Heart left ventricle (tissue), 16 donors: ENCODE measurements at regions of chr22 and their contacts with region 1.

Region 1: DNA sequence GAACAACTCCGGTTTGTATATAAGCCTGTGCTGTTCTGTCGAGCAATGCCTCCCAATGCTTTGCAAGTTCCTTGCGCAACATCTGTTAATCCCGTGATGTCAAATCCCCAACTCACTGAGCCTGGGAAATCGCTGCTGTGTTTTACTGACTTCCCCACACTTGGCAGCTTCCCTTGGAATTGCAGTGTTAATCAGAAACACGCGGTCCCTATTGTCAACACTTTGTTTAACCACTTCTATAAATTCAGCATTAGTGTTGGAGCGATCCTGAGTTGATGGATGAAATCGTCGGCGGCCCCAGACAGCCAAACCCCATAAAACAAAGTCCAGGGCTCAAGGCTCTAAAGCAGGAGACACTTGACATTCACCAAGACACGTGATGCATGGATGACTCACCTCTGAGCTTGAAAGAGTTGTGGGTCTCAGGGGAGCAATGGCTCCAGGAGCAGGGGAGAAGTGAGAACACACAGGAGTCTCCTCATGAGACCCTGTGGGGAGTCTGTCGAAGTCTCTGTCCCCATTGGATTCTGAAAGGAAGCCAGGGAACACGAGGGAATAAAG is 555.3 kb downstream of the MIAT start:
- DNase-seq: peak in 4 of 5 donors; percentile 70 to 76 (median 73)
- ATAC-seq: peak; percentile 44 to 89 (median 79)
- H3K4me3 ChIP-seq: no peak overlapping the region
- H3K27ac ChIP-seq: peak overlapping the region in 11 of 12 donors; percentile 23 to 81 (median 67)
- H3K4me1 ChIP-seq: peaks cover 0 to 34% (median 11%) of the 10 kb centered on the region in 12 donors
- H3K27me3 ChIP-seq: peaks cover 0 to 22% (median 0%) of the 10 kb centered on the region in 9 donors
- CTCF ChIP-seq: no peak
- POLR2A ChIP-seq: no peak

Region 2: DNA sequence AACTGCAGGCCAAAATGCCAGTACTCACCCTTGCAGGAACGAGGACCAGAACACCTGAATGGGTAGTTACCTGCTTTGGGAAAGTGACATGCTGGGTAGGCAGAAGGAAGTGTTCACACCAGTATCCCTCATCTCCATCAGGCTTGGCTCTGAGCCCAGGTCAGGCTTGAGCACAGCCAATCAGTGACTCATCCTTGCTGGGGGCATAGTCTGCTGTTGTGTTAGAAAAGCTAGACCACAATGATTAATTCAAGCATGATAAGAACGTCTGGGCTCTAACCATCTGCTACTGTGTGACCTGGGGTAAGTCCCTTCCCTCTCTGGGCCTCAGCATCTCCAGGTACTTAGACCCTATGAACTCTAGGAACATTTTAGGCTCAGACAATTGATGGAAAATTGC is 104.9 kb before region 1 on chr22:
- intact Hi-C with region 1: loop called in 1 of 10 experiments (anchors 10 kb)
- DNase-seq: peak in 3 of 5 donors; percentile 70 to 78 (median 74)
- ATAC-seq: peak in 3 of 4 donors; percentile 30 to 82 (median 59)
- H3K4me3 ChIP-seq: no peak overlapping the region
- H3K27ac ChIP-seq: peak overlapping the region in 4 of 12 donors; percentile 13 to 77 (median 36)
- H3K4me1 ChIP-seq: peaks cover 0 to 36% (median 8%) of the 10 kb centered on the region in 12 donors
- H3K27me3 ChIP-seq: peaks cover 0 to 16% (median 2%) of the 10 kb centered on the region in 9 donors
- CTCF ChIP-seq: no peak
- POLR2A ChIP-seq: no peak